Activated naive CD4-positive, alpha-beta T cell treated with anti-CD3 and anti-CD28 coated beads for 36 hours (primary cell): ENCODE measurements at regions of chr11 and their contacts with region 1.

Region 1: DNA sequence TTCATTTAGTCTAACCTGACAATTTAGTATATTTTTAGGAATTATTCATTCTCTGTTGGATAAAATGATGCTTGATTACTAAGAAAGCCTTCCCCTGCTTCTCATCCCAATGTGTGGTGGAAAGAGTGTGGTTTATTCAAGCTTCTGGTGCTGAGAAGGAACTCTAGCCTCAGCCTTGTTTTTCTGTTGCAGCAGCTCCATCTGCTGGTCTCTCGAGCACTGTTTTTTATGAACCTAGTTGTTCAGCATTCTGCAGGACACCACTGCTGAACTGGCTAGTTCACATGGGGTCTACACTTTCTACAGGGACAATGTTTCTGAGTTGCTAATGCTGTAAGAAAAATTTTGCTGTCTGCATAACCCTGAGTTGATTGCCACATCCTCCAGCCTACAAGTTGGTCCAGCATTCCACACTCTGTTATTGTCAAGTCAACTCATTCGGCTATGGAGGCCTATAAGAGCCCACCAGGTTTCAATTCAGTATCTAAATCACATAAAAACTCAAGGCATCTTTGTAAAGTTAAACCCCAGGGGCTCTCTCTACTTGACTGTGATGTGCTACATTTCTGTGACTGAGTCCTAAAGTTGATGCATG is 14.3 kb downstream of the OR2AG2 start:
- DNase-seq: peak; percentile 86
- H3K4me3 Mint-ChIP-seq: no peak overlapping the region
- H3K27ac Mint-ChIP-seq: no peak overlapping the region
- H3K4me1 Mint-ChIP-seq: peaks cover 10% of the 10 kb centered on the region
- H3K27me3 Mint-ChIP-seq: no peaks in the 10 kb centered on the region

Region 2: DNA sequence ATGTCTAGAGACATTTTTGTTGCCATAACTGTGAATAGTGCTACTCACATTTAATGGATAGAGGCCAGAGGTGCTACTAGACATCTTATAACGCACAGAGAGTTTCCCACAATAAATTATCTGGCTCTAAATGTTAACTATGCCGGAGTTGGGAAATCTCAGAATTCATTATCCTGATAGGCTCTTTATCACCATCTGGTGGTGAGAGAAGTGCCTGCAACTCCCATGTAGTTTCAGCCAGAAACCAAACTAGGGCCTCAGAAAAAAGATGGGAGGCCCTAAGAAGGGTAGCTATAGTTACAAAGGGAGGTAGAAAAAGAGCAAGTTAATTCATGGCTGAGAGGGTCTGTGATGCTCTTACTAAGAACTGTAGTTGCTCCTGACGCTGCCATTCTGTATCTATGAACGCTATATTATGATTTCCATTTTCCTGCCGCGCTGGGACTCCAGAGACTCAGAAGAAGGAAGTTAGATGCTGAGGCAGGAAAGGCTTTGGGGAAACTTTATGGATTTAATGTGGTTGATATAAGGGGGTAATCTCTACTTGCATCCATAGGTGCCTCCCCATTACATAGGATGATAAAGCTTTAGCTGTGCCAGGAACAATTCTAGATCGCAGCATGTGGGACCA is 51.5 kb before region 1 on chr11:
- CTCF ChIA-PET with region 1: interaction called, 98 read pairs
- intact Hi-C with region 1: loop called (anchors 1 kb)
- DNase-seq: peak; percentile 66
- H3K4me3 Mint-ChIP-seq: no peak overlapping the region
- H3K27ac Mint-ChIP-seq: no peak overlapping the region
- H3K4me1 Mint-ChIP-seq: peaks cover 17% of the 10 kb centered on the region
- H3K27me3 Mint-ChIP-seq: no peaks in the 10 kb centered on the region

Region 3: GRCh38 chr11:6719576-6719975 is 37.9 kb before region 1 on chr11:
- CTCF ChIA-PET with region 1: interaction called, 30 read pairs
- intact Hi-C with region 1: no loop called
- DNase-seq: no peak
- H3K4me3 Mint-ChIP-seq: no peak overlapping the region
- H3K27ac Mint-ChIP-seq: no peak overlapping the region
- H3K4me1 Mint-ChIP-seq: peaks cover 63% of the 10 kb centered on the region
- H3K27me3 Mint-ChIP-seq: no peaks in the 10 kb centered on the region

Region 4: GRCh38 chr11:6746086-6746618 is 11.3 kb before region 1 on chr11:
- CTCF ChIA-PET with region 1: interaction called, 368 read pairs
- intact Hi-C with region 1: loop called (anchors 1 kb)
- DNase-seq: peak; percentile 60
- H3K4me3 Mint-ChIP-seq: no peak overlapping the region
- H3K27ac Mint-ChIP-seq: no peak overlapping the region
- H3K4me1 Mint-ChIP-seq: peaks cover 28% of the 10 kb centered on the region
- H3K27me3 Mint-ChIP-seq: no peaks in the 10 kb centered on the region

Region 5: GRCh38 chr11:6771926-6772893 is 14.7 kb after region 1 on chr11 and contains the start of gene OR2AG2:
- CTCF ChIA-PET with region 1: interaction called, 12 read pairs
- intact Hi-C with region 1: no loop called
- DNase-seq: no peak
- H3K4me3 Mint-ChIP-seq: no peak within 1 kb of the TSS
- H3K27ac Mint-ChIP-seq: no peak within 1 kb of the TSS
- H3K4me1 Mint-ChIP-seq: no peaks in the 10 kb centered on the region
- H3K27me3 Mint-ChIP-seq: no peaks in the 10 kb centered on the region
- total RNA-seq, gene OR2AG2: 0.05 TPM in 1 of 2 experiments, not detected in the other